MCF 10A (cell line): ENCODE measurements at regions of chr1 and their contacts with region 1.

Region 1: DNA sequence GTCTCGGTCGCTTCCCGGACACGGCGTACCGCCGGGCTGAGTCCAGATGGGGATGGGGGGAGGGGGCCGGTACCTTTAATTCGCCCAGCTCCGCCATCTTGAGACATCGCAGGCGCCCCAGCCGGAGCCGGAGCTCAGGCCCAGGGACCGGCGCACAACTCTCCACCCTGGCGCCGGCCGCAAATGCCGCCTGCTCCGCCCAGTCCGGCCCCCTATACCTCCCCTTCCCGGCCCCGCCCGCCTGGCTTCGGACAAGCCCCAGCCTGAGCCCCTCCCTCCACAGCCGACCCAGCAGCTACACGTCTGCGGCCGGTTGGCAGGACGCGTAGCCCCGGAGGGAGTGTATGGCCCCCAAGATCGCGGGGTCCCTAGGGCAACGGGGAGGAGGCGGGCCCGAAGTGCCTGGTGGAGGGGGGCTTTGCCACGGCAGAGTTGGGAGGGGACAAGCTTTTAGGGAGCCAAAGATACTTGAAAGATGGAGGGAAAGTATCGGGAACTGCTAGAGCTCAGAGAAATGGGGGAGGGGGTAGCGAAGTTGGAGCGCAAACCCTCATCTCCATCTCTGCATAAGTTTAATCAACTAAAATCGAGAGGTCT is at the start of gene PIAS3:
- DNase-seq: peak; percentile 97
- H3K4me3 Mint-ChIP-seq: peak within 1 kb of the TSS; percentile 99
- H3K27ac Mint-ChIP-seq: peak within 1 kb of the TSS; percentile 86
- H3K4me1 Mint-ChIP-seq: peaks cover 21% of the 10 kb centered on the region
- H3K27me3 Mint-ChIP-seq: no peaks in the 10 kb centered on the region
- CTCF ChIP-seq: no peak
- total RNA-seq, gene PIAS3: 34.3 and 36.9 TPM in 2 replicates

Region 2: DNA sequence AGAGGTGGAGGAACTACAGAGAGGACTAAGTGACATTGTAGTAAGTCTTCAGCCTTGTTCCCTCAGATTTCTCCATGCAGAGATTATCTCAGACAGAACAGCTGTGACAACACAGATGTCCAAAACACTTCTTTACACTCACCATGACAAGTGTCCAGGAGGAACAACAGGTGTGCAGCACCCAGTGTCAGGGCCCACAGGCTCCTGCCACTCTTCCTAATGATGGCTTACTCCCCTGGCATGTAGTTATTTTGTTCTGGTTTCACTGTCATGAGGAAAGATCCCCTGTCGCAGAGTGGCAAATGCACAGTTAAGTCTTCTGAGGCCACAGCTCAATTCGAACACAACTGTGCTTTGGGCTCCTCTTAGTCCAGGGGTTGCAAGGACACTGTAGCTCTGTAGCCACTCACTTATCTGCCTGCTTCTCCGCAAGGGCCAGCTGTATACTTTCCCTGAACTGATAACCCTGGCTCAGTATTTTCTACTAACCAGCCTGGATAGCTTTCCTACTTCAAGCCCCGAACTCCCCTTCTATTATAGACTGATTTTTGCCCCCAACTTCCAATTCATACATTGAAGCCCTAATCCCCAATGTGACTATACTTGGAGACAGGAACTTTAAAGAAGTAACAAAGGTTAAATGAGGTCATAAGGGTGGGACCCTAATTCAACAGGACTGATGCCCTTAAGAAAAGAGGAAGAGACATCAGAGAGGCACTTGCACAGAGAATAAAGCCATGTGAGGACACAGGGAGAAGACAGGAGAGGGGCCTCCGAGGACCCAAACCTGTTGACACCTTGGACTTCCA is 163.0 kb before region 1 on chr1:
- CTCF ChIA-PET with region 1: no interaction called
- POLR2A ChIA-PET with region 1: no interaction called
- intact Hi-C with region 1: no loop called
- DNase-seq: no peak
- H3K4me3 Mint-ChIP-seq: no peak overlapping the region
- H3K27ac Mint-ChIP-seq: no peak overlapping the region
- H3K4me1 Mint-ChIP-seq: peaks cover 4% of the 10 kb centered on the region
- H3K27me3 Mint-ChIP-seq: no peaks in the 10 kb centered on the region
- CTCF ChIP-seq: no peak

Region 3: DNA sequence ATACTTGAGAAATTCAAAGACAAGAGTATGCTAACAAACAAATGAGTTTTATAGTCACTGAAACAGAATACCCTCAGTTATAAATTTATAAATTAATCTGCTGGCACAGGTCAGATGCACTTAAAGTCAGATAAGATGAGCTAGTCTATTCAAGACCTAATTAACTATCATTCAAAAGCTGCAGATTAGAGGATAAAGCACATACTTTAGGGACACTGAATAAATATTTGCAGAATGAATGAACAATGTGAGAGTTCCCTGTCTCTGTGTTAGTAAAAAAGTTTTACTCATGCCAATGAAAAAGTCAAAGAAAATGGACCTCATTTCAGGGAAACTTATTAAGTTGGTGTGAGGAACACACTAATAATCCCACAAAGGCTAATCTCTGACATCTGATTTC is 93.4 kb before region 1 on chr1:
- CTCF ChIA-PET with region 1: no interaction called
- POLR2A ChIA-PET with region 1: no interaction called
- intact Hi-C with region 1: no loop called
- DNase-seq: no peak
- H3K4me3 Mint-ChIP-seq: no peak overlapping the region
- H3K27ac Mint-ChIP-seq: no peak overlapping the region
- H3K4me1 Mint-ChIP-seq: no peaks in the 10 kb centered on the region
- H3K27me3 Mint-ChIP-seq: no peaks in the 10 kb centered on the region
- CTCF ChIP-seq: no peak

Region 4: GRCh38 chr1:145871994-145872924 is 13.3 kb after region 1 on chr1:
- CTCF ChIA-PET with region 1: interaction called, 4 read pairs
- POLR2A ChIA-PET with region 1: interaction called, 20 read pairs
- intact Hi-C with region 1: no loop called
- DNase-seq: no peak
- H3K4me3 Mint-ChIP-seq: no peak overlapping the region
- H3K27ac Mint-ChIP-seq: no peak overlapping the region
- H3K4me1 Mint-ChIP-seq: no peaks in the 10 kb centered on the region
- H3K27me3 Mint-ChIP-seq: peaks cover 11% of the 10 kb centered on the region
- CTCF ChIP-seq: no peak

Region 5: GRCh38 chr1:145906954-145907753 is 48.2 kb after region 1 on chr1:
- CTCF ChIA-PET with region 1: interaction called, 67 read pairs
- POLR2A ChIA-PET with region 1: interaction called, 34 read pairs
- intact Hi-C with region 1: no loop called
- DNase-seq: no peak
- H3K4me3 Mint-ChIP-seq: no peak overlapping the region
- H3K27ac Mint-ChIP-seq: peak overlapping the region; percentile 57
- H3K4me1 Mint-ChIP-seq: peaks cover 24% of the 10 kb centered on the region
- H3K27me3 Mint-ChIP-seq: no peaks in the 10 kb centered on the region
- CTCF ChIP-seq: no peak

Region 6: GRCh38 chr1:145957443-145958319 is 98.7 kb after region 1 on chr1 and contains the start of gene LIX1L:
- CTCF ChIA-PET with region 1: interaction called, 7 read pairs
- POLR2A ChIA-PET with region 1: interaction called, 92 read pairs
- intact Hi-C with region 1: no loop called
- DNase-seq: peak; percentile 100
- H3K4me3 Mint-ChIP-seq: peak within 1 kb of the TSS; percentile 80
- H3K27ac Mint-ChIP-seq: peak within 1 kb of the TSS; percentile 80
- H3K4me1 Mint-ChIP-seq: peaks cover 65% of the 10 kb centered on the region
- H3K27me3 Mint-ChIP-seq: no peaks in the 10 kb centered on the region
- CTCF ChIP-seq: no peak
- total RNA-seq, gene LIX1L: 40.1 and 42.1 TPM in 2 replicates

Region 7: DNA sequence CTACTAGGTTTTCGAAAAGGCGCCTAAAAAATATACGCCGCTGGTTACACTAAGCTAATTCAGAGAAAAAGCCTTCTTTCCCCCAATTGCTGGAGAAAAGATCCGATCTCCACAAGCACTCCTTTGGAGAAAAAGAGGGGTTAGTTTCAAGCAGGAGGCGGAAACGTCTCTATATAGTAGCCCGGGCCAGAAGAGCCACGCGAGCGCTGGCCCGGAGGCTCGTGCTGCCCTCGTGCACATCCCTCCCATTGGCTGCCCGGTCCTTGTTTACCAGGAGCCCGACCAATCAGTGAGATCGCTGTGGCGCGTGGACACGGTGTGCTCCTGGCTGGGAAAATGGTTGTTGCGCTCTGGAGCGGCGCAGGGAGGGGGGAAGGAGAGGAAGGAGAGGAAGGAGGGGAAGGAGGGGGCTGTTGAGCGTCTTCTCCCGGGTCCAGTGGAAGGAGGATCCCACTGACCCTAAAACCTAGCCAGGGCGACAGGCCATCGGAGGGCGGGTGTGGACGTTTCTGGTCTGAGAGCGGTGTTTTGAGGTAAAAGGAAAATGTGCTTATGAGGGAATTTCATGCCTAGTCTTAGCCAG is 137.5 kb after region 1 on chr1 and contains the start of gene TXNIP:
- CTCF ChIA-PET with region 1: interaction called, 4 read pairs
- POLR2A ChIA-PET with region 1: interaction called, 38 read pairs
- intact Hi-C with region 1: no loop called
- DNase-seq: peak; percentile 99
- H3K4me3 Mint-ChIP-seq: peak within 1 kb of the TSS; percentile 89
- H3K27ac Mint-ChIP-seq: peak within 1 kb of the TSS; percentile 95
- H3K4me1 Mint-ChIP-seq: peaks cover 51% of the 10 kb centered on the region
- H3K27me3 Mint-ChIP-seq: no peaks in the 10 kb centered on the region
- CTCF ChIP-seq: no peak
- total RNA-seq, gene TXNIP: 576 and 599 TPM in 2 replicates

Region 8: GRCh38 chr1:146036965-146037646 is 178.1 kb after region 1 on chr1:
- CTCF ChIA-PET with region 1: interaction called, 5 read pairs
- POLR2A ChIA-PET with region 1: interaction called, 50 read pairs
- intact Hi-C with region 1: no loop called
- DNase-seq: peak; percentile 95
- H3K4me3 Mint-ChIP-seq: peak overlapping the region; percentile 99
- H3K27ac Mint-ChIP-seq: peak overlapping the region; percentile 98
- H3K4me1 Mint-ChIP-seq: peaks cover 11% of the 10 kb centered on the region
- H3K27me3 Mint-ChIP-seq: no peaks in the 10 kb centered on the region
- CTCF ChIP-seq: no peak